ENCODE measurements at regions of chr14 and their contacts with region 1.

Region 1: DNA sequence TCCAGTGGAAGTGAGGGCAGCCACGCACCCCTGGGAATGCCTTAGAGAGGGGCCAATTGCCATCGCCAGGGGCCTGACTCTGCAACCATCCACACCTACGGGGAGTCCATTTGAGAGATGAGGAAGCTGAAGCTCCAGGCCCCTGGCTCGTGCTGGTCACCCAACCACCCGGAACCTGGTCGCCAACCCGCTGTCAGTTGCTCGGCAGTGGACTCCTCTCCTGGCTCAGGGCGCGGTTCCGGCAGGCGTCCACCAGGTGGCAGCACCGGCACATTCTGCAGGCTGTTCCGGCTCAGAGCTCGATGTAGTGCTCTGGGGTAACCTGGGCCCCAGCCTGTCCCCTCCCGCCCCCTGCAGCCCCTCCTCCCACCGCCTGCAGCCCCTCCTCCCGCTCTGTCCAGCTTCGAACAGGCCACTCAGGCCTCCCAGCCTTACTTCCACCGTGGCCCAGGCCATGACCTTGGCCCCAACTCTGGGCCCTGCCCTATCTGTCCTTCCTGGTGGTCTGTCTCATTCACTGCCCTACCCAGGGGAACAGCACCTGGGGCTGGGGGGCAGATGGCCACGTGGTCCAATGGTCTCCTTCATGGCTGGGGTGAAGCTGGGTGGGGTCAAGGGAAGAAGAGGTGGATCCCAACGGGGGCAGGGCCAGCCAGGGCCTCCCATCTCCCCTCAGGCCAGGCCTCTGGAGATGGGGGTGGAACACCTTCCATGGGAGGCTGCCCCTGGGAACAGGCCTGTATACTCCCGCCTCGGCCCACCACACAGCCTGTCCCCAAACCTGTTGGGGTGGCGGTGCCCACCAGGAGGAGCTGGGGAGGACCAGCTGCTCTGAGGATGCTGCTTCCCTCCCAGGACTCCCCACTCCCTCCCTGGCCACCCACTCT is 15.7 kb downstream of the SIVA1 start:
- DNase-seq: peak; percentile 95
- H3K4me3 Mint-ChIP-seq: no peak overlapping the region
- H3K27ac Mint-ChIP-seq: peak overlapping the region; percentile 41
- H3K4me1 Mint-ChIP-seq: peaks cover 7% of the 10 kb centered on the region
- H3K27me3 Mint-ChIP-seq: no peaks in the 10 kb centered on the region

Region 2: DNA sequence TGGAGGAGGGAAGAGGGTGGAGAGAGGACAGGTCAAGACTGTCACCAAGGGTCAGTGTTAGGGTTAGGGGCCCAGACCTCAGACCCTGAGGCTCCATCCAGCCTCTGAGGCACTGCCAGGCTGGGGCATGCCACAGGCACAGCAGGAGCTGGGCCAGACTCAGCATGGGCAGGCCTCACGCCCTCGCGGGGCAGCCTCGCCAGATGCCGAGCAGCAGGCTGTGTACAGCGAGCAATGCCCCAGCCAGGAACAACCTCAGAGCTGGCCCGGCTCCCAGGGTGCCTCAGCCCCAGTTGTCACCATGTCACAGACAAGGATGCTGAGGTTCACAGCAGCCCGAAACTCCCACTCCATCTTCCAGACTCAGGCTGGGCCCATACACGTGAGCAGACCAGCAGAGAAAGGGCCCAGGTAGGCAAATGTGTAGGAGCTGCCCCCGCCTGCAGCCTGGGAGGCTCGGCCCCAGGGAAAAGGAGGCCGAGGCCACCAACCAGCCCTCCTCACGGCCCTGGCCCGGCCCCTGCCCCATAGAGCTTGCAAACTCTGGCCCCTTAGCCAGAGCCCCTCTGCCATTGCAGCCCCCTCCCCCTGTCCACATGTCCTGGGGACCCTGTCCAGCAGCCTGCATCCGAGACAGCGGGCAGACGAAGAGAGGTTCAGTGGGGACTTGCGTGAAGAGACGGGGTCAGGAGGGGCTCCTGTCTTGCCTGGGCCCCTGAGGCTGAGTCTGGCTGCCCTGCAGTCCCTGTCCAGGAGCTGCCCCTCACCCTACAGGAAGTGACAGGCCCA is 181.7 kb before region 1 on chr14:
- CTCF ChIA-PET with region 1: no interaction called
- intact Hi-C with region 1: no loop called
- DNase-seq: no peak
- H3K4me3 Mint-ChIP-seq: no peak overlapping the region
- H3K27ac Mint-ChIP-seq: no peak overlapping the region
- H3K4me1 Mint-ChIP-seq: no peaks in the 10 kb centered on the region
- H3K27me3 Mint-ChIP-seq: no peaks in the 10 kb centered on the region

Region 3: DNA sequence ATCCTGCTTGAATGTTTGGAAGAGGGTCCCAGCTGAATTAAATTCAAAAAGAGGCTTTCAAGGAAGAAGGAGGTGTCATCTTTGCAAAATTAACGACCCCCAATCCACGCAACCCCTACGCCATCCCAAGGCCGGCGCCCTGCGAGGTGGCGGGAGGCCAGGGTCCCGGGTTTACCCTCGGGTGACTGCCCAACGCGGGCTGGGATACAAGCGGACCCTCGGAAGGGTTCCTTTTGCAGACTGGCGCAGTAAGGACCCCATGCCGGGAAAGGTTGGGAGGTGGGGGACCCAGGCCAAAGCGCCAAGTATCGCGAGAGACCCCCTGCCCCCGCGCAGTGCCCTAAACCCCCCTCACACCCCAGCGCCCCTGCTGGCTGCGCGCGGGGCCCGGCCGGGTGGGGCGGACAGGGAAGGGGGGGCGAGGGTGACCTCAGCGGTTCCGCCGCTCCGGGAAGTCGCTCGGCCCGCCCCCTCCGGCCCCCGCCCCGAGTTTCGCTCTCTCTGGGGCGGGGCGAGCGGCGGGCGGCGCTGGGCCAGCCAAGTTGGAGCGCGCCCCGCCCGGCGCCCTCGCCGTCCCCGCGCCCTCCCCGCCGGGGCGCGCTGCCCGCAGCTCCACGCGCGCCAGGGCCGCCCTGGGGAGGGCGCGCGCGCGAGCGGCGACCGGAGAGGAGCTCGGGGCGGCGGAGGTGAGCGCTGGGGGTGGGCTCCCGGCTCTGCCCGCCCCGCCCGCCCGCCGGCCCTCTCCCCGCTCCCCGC is 31.5 kb after region 1 on chr14:
- CTCF ChIA-PET with region 1: interaction called, 4 read pairs
- intact Hi-C with region 1: loop called (anchors 2 kb)
- DNase-seq: peak; percentile 77
- H3K4me3 Mint-ChIP-seq: peak overlapping the region; percentile 3
- H3K27ac Mint-ChIP-seq: no peak overlapping the region
- H3K4me1 Mint-ChIP-seq: peaks cover 24% of the 10 kb centered on the region
- H3K27me3 Mint-ChIP-seq: no peaks in the 10 kb centered on the region

Region 4: GRCh38 chr14:104865644-104866441 is 97.2 kb after region 1 on chr14:
- CTCF ChIA-PET with region 1: no interaction called
- intact Hi-C with region 1: loop called (anchors 1 kb)
- DNase-seq: peak; percentile 38
- H3K4me3 Mint-ChIP-seq: peak overlapping the region; percentile 65
- H3K27ac Mint-ChIP-seq: no peak overlapping the region
- H3K4me1 Mint-ChIP-seq: peaks cover 2% of the 10 kb centered on the region
- H3K27me3 Mint-ChIP-seq: peaks cover 25% of the 10 kb centered on the region

Measured in activated naive CD4-positive, alpha-beta T cell treated with anti-CD3 and anti-CD28 coated beads for 36 hours (primary cell).